Sciatic nerve (tissue), 2 donors: ENCODE measurements at regions of chr7 and their contacts with region 1.

Region 1: GRCh38 chr7:128209229-128210035 is 31.6 kb upstream of the LEP start:
- DNase-seq: peak; percentile 80
- ATAC-seq: peak; percentile 85

Region 2: DNA sequence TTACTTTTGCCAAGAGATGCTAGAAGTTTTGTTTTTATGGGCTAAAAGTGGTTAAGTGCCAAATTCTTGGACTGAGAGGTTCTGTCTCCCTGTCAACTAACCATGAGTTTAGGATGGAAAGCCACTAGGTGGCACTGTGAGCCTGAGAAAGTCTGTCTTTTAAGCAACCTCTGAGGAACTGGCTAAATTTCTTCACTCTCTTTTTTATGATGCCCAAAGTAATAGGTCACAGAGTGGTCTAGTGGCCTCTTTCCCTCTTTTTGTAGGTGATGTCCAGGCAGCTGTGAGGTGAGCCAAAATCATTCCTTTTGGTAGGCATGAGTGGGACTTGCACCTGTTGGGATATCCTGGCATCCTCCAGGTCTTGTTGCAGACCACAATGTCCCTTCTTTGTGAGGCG is 500.6 kb before region 1 on chr7:
- intact Hi-C with region 1: loop called (anchors 5 kb)
- DNase-seq: peak; percentile 89
- ATAC-seq: peak; percentile 96

Region 3: GRCh38 chr7:127792528-127793342 is 416.7 kb before region 1 on chr7:
- intact Hi-C with region 1: no loop called
- DNase-seq: no peak
- ATAC-seq: no peak

Region 4: GRCh38 chr7:128135515-128136214 is 73.8 kb before region 1 on chr7:
- intact Hi-C with region 1: loop called (anchors 5 kb)
- DNase-seq: peak; percentile 74
- ATAC-seq: peak; percentile 88

Region 5: GRCh38 chr7:128221929-128222403 is 12.5 kb after region 1 on chr7:
- intact Hi-C with region 1: no loop called
- DNase-seq: no peak
- ATAC-seq: no peak